ENCODE measurements at regions of chr17 and their contacts with region 1.

Region 1: GRCh38 chr17:13002766-13003451 is 14.9 kb downstream of the ELAC2 start:
- DNase-seq: peak; percentile 57
- H3K4me3 Mint-ChIP-seq: no peak overlapping the region
- H3K27ac Mint-ChIP-seq: no peak overlapping the region
- H3K4me1 Mint-ChIP-seq: peaks cover 2% of the 10 kb centered on the region
- H3K27me3 Mint-ChIP-seq: no peaks in the 10 kb centered on the region

Region 2: GRCh38 chr17:12256380-12256995 is 746.4 kb before region 1 on chr17:
- CTCF ChIA-PET with region 1: no interaction called
- POLR2A ChIA-PET with region 1: no interaction called
- intact Hi-C with region 1: loop called (anchors 5 kb)
- DNase-seq: peak; percentile 21
- H3K4me3 Mint-ChIP-seq: no peak overlapping the region
- H3K27ac Mint-ChIP-seq: no peak overlapping the region
- H3K4me1 Mint-ChIP-seq: no peaks in the 10 kb centered on the region
- H3K27me3 Mint-ChIP-seq: no peaks in the 10 kb centered on the region

Region 3: GRCh38 chr17:12990041-12990808 is 12.7 kb before region 1 on chr17:
- CTCF ChIA-PET with region 1: interaction called, 10 read pairs
- POLR2A ChIA-PET with region 1: no interaction called
- intact Hi-C with region 1: no loop called
- DNase-seq: no peak
- H3K4me3 Mint-ChIP-seq: no peak overlapping the region
- H3K27ac Mint-ChIP-seq: no peak overlapping the region
- H3K4me1 Mint-ChIP-seq: no peaks in the 10 kb centered on the region
- H3K27me3 Mint-ChIP-seq: no peaks in the 10 kb centered on the region

Region 4: GRCh38 chr17:13017659-13018459 is 14.9 kb after region 1 on chr17 and contains the start of gene ELAC2:
- CTCF ChIA-PET with region 1: interaction called, 11 read pairs
- POLR2A ChIA-PET with region 1: interaction called, 9 read pairs
- intact Hi-C with region 1: no loop called
- DNase-seq: peak; percentile 97
- H3K4me3 Mint-ChIP-seq: peak within 1 kb of the TSS; percentile 94
- H3K27ac Mint-ChIP-seq: peak within 1 kb of the TSS; percentile 97
- H3K4me1 Mint-ChIP-seq: peaks cover 26% of the 10 kb centered on the region
- H3K27me3 Mint-ChIP-seq: no peaks in the 10 kb centered on the region
- total RNA-seq, gene ELAC2: 63.1 to 64.2 TPM

Measured in activated CD4-positive, alpha-beta memory T cell treated with anti-CD3 and anti-CD28 coated beads for 36 hours (primary cell).